ENCODE measurements at regions of chr12 and their contacts with region 1.

Region 1: DNA sequence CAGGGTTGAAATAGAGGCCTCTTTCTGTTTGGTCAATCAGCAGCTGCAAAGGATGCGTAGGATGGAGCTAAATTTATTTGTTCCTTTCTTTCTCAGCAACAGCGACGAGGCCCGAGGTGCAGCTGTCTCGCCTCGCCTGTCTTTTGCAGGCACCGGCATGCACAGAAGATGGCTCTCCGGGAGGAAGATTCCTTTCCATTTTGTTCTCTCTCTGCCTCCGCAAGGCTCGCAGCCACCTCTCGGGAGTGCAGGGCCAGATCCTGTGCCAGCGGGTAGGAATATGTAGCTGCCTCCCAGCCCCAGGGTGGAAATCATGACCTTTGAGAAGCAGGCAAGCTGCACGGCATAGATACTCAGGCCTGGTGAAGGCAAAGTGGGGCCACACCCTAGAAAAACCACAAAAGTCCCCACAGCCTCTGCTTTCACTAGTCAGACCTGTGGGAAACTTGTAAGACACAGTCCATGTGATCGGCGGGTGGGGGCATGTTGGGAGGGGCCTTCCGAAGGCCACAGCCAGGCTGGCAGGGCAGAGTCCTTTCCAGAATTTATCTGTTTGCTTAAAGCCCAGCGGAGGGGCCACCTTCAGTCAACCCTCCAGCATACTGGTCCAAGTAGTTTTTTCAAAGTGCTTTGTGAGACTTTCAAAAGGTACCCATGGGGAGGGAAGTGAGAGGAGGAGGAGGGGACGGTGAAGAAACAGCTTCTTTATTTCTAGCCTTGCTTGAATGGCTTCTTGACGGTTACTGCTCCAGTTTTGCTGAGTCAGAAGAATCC is at the start of gene MAP1LC3B2:
- DNase-seq: peak; percentile 88
- H3K4me3 Mint-ChIP-seq: peak within 1 kb of the TSS; percentile 69
- H3K27ac Mint-ChIP-seq: peak within 1 kb of the TSS; percentile 95
- H3K4me1 Mint-ChIP-seq: peaks cover 34% of the 10 kb centered on the region
- H3K27me3 Mint-ChIP-seq: no peaks in the 10 kb centered on the region
- total RNA-seq, gene MAP1LC3B2: 0.78 to 1.2 TPM

Region 2: DNA sequence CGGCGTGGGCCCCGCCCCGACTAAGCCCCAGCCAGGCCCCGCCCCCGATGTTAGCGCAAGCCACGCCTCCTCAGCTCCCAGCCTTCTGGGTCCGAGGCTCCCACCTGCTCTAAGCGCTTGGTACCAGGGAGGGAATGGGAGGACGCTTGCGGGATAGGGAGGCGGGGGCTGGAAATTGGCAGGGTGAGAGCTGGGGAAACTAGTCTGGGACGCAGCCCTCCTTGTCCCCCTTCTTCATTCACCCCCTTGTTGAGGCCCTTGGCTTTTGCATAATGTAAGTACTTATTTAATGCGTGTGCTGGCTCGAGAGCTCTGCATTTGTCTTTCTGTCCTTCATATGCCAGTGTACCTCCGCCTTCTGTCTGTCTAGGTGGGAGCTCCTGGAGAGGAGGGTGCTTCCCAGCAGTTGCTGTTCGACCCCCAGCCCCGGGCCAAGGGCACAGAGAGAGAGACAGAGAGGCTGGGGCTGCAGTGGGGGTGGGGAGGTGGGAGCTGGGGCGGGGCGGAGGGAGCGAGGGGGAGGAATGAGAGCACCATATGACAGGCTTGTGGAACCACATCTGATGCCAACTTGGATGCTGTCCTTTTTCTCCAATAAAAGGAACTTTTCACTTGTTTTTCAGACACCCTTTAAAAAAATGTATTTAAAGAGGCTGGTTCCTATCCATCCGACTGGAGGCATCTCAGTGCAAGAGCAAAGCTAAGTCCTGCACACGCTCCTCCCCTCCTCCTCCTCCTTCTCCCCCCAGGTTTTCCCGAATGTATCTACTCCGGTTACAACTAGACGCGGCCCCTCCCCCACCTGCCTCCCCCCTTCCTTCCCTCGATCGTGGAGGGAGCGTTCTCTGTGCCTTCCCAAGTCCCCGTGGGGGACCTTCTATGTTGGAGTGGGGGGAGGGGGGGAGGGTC is 25.8 kb before region 1 on chr12:
- CTCF ChIA-PET with region 1: interaction called, 3 read pairs
- POLR2A ChIA-PET with region 1: interaction called, 10 read pairs
- intact Hi-C with region 1: loop called (anchors 1 kb)
- DNase-seq: peak; percentile 84
- H3K4me3 Mint-ChIP-seq: peak overlapping the region; percentile 78
- H3K27ac Mint-ChIP-seq: no peak overlapping the region
- H3K4me1 Mint-ChIP-seq: peaks cover 24% of the 10 kb centered on the region
- H3K27me3 Mint-ChIP-seq: no peaks in the 10 kb centered on the region

Region 3: GRCh38 chr12:116571089-116571488 is 11.7 kb after region 1 on chr12:
- CTCF ChIA-PET with region 1: no interaction called
- POLR2A ChIA-PET with region 1: no interaction called
- intact Hi-C with region 1: no loop called
- DNase-seq: no peak
- H3K4me3 Mint-ChIP-seq: no peak overlapping the region
- H3K27ac Mint-ChIP-seq: no peak overlapping the region
- H3K4me1 Mint-ChIP-seq: no peaks in the 10 kb centered on the region
- H3K27me3 Mint-ChIP-seq: no peaks in the 10 kb centered on the region

Region 4: DNA sequence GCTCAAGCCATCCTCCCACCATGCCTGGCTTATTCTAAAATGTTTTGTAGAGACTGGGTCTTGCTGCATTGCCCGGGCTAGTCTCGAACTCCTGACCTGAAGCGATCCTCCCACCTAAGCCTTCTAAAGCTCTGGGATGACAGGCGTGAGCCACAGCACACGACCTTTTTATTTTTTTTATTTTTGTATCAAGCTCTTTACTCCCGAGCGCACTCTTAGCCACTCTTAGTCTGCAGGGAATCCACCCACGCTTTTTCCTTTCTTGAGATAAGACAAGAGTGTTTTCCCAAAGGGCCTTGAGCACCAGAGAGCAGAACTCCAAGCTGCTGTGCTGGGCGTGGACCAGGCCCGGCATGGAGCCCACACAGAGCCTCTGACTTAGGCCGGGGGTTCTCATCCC is 23.3 kb after region 1 on chr12:
- CTCF ChIA-PET with region 1: no interaction called
- POLR2A ChIA-PET with region 1: no interaction called
- intact Hi-C with region 1: no loop called
- DNase-seq: no peak
- H3K4me3 Mint-ChIP-seq: no peak overlapping the region
- H3K27ac Mint-ChIP-seq: no peak overlapping the region
- H3K4me1 Mint-ChIP-seq: no peaks in the 10 kb centered on the region
- H3K27me3 Mint-ChIP-seq: no peaks in the 10 kb centered on the region

Region 5: GRCh38 chr12:116594325-116595038 is 35.1 kb after region 1 on chr12:
- CTCF ChIA-PET with region 1: interaction called, 4 read pairs
- POLR2A ChIA-PET with region 1: no interaction called
- intact Hi-C with region 1: loop called (anchors 2 kb)
- DNase-seq: peak; percentile 62
- H3K4me3 Mint-ChIP-seq: no peak overlapping the region
- H3K27ac Mint-ChIP-seq: no peak overlapping the region
- H3K4me1 Mint-ChIP-seq: peaks cover 22% of the 10 kb centered on the region
- H3K27me3 Mint-ChIP-seq: no peaks in the 10 kb centered on the region

Region 6: DNA sequence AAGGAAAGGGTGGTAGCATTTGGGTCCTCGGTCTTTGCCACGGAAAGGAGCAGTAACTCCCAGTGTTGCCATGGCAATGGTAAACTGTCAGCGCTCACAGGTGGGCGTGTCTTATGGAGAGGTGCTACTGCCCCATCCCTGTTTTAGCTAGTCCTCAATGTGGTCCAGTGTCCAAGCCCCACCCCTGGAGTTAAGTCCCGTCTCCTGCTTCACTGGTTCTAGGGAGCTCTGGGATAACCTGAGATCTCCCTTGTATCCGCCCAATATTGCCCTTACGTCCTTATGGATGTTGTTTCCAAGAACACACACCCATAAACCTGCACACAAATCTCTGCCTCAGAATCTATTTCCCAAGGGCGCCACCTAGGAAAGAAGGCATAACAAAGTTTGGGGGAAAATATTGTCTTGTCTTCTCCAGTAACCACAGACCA is 114.3 kb after region 1 on chr12:
- CTCF ChIA-PET with region 1: no interaction called
- POLR2A ChIA-PET with region 1: no interaction called
- intact Hi-C with region 1: loop called (anchors 1 kb)
- DNase-seq: peak; percentile 29
- H3K4me3 Mint-ChIP-seq: no peak overlapping the region
- H3K27ac Mint-ChIP-seq: no peak overlapping the region
- H3K4me1 Mint-ChIP-seq: peaks cover 29% of the 10 kb centered on the region
- H3K27me3 Mint-ChIP-seq: no peaks in the 10 kb centered on the region